Transverse colon (tissue), 4 donors: ENCODE measurements at regions of chr19 and their contacts with region 1.

Region 1: GRCh38 chr19:732148-733069 is 18.5 kb upstream of the MISP start:
- DNase-seq: no peak
- H3K4me3 ChIP-seq: no peak overlapping the region
- H3K27ac ChIP-seq: no peak overlapping the region
- H3K4me1 ChIP-seq: no peaks in the 10 kb centered on the region
- H3K27me3 ChIP-seq: no peaks in the 10 kb centered on the region
- CTCF ChIP-seq: no peak
- EP300 ChIP-seq: no peak
- POLR2A ChIP-seq: no peak

Region 2: GRCh38 chr19:664913-665443 is 67.4 kb before region 1 on chr19:
- in situ Hi-C with region 1: loop called in 2 of 4 experiments (anchors 5 kb)
- intact Hi-C with region 1: loop called (anchors 1 kb)
- DNase-seq: peak; percentile 84
- H3K4me3 ChIP-seq: peak overlapping the region in 2 of 4 donors; percentile 11 to 33
- H3K27ac ChIP-seq: peak overlapping the region in 3 of 4 donors; percentile 9 to 97 (median 95)
- H3K4me1 ChIP-seq: peaks cover 21 to 42% (median 36%) of the 10 kb centered on the region in 4 donors
- H3K27me3 ChIP-seq: no peaks in the 10 kb centered on the region
- CTCF ChIP-seq: peak; percentile 92 to 97 (median 97)
- EP300 ChIP-seq: no peak
- POLR2A ChIP-seq: no peak

Region 3: GRCh38 chr19:778910-779653 is 46.7 kb after region 1 on chr19:
- in situ Hi-C with region 1: no loop called
- intact Hi-C with region 1: no loop called
- DNase-seq: peak; percentile 38
- H3K4me3 ChIP-seq: no peak overlapping the region
- H3K27ac ChIP-seq: peak overlapping the region; percentile 24 to 60 (median 47)
- H3K4me1 ChIP-seq: peaks cover 0 to 14% (median 6%) of the 10 kb centered on the region in 4 donors
- H3K27me3 ChIP-seq: peaks cover 46% of the 10 kb centered on the region
- CTCF ChIP-seq: no peak
- EP300 ChIP-seq: no peak
- POLR2A ChIP-seq: no peak

Region 4: GRCh38 chr19:821825-822503 is 89.6 kb after region 1 on chr19 and contains the start of gene PLPPR3:
- in situ Hi-C with region 1: no loop called
- intact Hi-C with region 1: no loop called
- DNase-seq: no peak
- H3K4me3 ChIP-seq: peak within 1 kb of the TSS in 3 of 4 donors; percentile 14 to 40 (median 24)
- H3K27ac ChIP-seq: no peak within 1 kb of the TSS
- H3K4me1 ChIP-seq: peaks cover 0 to 16% (median 14%) of the 10 kb centered on the region in 4 donors
- H3K27me3 ChIP-seq: peaks cover 57% of the 10 kb centered on the region
- CTCF ChIP-seq: no peak
- EP300 ChIP-seq: no peak
- POLR2A ChIP-seq: no peak
- total RNA-seq, gene PLPPR3: not detected